ENCODE measurements at regions of chr1 and their contacts with region 1.

Region 1: GRCh38 chr1:208238710-208239472 is 5.3 kb downstream of the PLXNA2 start:
- DNase-seq: no peak
- ATAC-seq: no peak
- H3K4me3 ChIP-seq: peak overlapping the region in 2 of 4 donors; percentile 37 to 80
- H3K27ac ChIP-seq: peak overlapping the region; percentile 34 to 97 (median 72)
- H3K4me1 ChIP-seq: peaks cover 71 to 81% of the 10 kb centered on the region in 2 donors
- H3K27me3 ChIP-seq: no peaks in the 10 kb centered on the region
- CTCF ChIP-seq: peak; percentile 36 to 80 (median 47)
- POLR2A ChIP-seq: no peak

Region 2: DNA sequence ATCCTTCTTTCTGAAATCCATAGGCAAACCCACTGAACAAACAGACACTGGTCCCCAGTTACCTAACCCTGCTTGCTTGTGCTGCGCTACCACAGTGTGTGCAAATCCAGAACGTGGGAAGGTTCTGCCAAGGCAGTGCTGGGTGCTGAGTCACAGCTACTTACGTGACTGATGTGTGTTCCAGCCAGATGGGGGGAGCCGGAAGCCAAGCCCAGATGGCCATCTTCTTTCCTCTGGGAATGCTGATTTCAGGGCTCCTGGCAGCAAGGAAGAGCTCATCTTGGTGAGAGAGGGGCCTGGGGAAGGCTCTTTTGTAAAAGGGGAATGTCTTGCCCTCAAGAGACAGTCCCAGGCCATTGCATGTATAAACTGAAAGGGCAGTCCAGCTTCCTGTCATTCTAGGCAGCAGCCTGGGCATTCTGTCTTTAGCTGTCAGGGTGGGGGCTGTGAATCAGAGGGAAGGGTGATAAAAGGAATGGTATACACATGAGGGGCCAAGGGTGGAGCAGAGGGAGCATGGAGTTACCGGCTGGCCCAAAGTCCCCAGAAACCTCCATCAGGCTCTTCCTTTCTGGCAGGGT is 433.0 kb before region 1 on chr1:
- in situ Hi-C with region 1: no loop called
- intact Hi-C with region 1: loop called (anchors 10 kb)
- DNase-seq: peak; percentile 91 to 97
- ATAC-seq: peak; percentile 73 to 82
- H3K4me3 ChIP-seq: peak overlapping the region in 3 of 4 donors; percentile 13 to 22 (median 16)
- H3K27ac ChIP-seq: peak overlapping the region; percentile 96 to 100 (median 99)
- H3K4me1 ChIP-seq: peaks cover 72 to 74% of the 10 kb centered on the region in 2 donors
- H3K27me3 ChIP-seq: no peaks in the 10 kb centered on the region
- CTCF ChIP-seq: no peak
- POLR2A ChIP-seq: peak in 1 of 2 donors; percentile 64

Region 3: DNA sequence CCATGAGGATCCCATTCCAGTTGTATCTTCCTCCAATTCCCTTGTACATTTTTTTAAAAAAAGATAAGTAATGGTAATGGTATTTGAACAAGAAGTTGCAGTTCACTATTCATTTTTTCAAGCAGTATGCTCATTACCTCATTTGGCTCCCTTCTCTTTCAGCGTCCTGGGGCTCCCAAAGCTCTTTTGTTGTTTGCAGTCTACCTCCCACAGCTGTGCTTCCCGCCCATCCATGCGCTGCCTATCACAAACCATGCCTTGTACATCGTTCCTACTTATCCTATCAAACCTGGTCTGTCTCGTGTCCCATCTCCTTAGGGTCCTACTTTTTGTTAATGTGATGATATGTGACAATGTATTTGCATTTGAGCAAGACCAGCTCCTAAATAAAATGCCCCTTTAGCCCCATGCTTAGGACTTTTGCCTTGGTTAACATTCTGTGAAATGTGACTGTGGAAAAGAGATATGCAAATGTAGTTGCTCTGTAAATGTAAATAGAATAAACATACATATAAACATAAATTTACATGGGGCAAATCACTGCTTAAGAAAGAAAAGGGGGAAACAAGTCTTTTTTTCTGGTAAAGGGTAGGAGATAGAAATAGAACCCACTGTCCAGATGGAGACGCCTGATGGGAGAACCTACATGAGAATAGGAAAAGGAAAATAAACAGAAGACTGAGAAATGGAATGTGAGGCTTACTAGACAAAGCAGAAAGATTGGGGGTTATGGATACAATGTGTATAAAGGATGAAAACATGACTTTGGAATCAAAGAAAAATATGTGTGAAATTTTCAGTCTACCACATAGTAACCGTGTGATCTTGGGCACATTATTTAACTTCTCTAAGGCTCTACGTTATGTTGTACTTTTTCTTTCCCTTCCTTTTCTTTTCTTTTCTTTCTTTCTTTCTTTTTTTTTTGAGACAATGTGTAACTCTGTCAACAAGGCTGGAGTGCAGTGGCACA is 65.1 kb after region 1 on chr1:
- in situ Hi-C with region 1: no loop called
- intact Hi-C with region 1: no loop called
- DNase-seq: no peak
- ATAC-seq: no peak
- H3K4me3 ChIP-seq: no peak overlapping the region
- H3K27ac ChIP-seq: no peak overlapping the region
- H3K4me1 ChIP-seq: no peaks in the 10 kb centered on the region
- H3K27me3 ChIP-seq: no peaks in the 10 kb centered on the region
- CTCF ChIP-seq: no peak
- POLR2A ChIP-seq: no peak

Region 4: DNA sequence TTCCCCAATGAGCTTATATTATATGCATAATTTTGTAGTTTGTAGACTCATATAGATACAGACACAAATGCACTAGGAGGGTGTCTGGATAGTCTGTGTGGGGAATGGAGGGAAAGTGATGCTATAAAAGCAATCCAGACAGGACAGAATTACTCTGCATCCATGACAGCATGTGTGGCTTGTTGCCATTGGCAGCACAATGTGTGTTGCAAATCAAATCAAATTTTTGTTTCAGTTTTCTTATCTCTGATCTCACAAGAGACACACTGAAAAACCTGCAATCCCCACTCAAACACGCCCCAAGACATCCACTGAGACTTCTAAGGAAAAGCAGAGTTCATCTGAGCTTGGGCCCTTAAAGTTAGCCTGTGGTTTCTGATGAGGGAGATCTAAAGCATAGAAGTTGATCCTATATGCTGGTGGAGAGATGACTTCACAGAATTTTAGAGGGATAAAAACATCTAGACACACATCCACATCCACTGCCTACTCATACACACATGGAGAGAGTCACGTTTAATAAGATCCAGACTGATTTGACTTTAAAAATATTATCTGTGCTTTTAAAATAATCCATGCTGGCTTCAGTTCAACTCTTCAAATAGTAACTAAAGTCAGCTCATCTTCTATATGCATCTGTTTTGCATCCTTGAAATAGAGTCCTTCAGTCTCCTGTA is 318.3 kb after region 1 on chr1:
- in situ Hi-C with region 1: no loop called
- intact Hi-C with region 1: no loop called
- DNase-seq: no peak
- ATAC-seq: no peak
- H3K4me3 ChIP-seq: no peak overlapping the region
- H3K27ac ChIP-seq: no peak overlapping the region
- H3K4me1 ChIP-seq: no peaks in the 10 kb centered on the region
- H3K27me3 ChIP-seq: no peaks in the 10 kb centered on the region
- CTCF ChIP-seq: no peak
- POLR2A ChIP-seq: no peak

Measured in gastrocnemius medialis (tissue), 4 donors.